Dendritic cell treated with granulocyte-macrophage colony-stimulating factor and Interleukin-4, amounts not matched to agents 40 ng/mL and 50 ng/mL, for 4 days (primary cell): ENCODE measurements at regions of chr14 and their contacts with region 1.

Region 1: GRCh38 chr14:70567791-70568190 is 32.7 kb downstream of the MED6 start:
- H3K4me3 Mint-ChIP-seq: no peak overlapping the region
- H3K27ac Mint-ChIP-seq: no peak overlapping the region
- H3K4me1 Mint-ChIP-seq: no peaks in the 10 kb centered on the region
- H3K27me3 Mint-ChIP-seq: no peaks in the 10 kb centered on the region

Region 2: GRCh38 chr14:69226178-69226577 is 1341.6 kb before region 1 on chr14:
- intact Hi-C with region 1: no loop called
- H3K4me3 Mint-ChIP-seq: no peak overlapping the region
- H3K27ac Mint-ChIP-seq: no peak overlapping the region
- H3K4me1 Mint-ChIP-seq: no peaks in the 10 kb centered on the region
- H3K27me3 Mint-ChIP-seq: no peaks in the 10 kb centered on the region

Region 3: GRCh38 chr14:70086685-70087379 is 481.0 kb before region 1 on chr14:
- intact Hi-C with region 1: loop called (anchors 10 kb)
- H3K4me3 Mint-ChIP-seq: no peak overlapping the region
- H3K27ac Mint-ChIP-seq: no peak overlapping the region
- H3K4me1 Mint-ChIP-seq: peaks cover 5% of the 10 kb centered on the region
- H3K27me3 Mint-ChIP-seq: no peaks in the 10 kb centered on the region